Tibial artery (tissue), 4 donors: ENCODE measurements at regions of chr11 and their contacts with region 1.

Region 1: DNA sequence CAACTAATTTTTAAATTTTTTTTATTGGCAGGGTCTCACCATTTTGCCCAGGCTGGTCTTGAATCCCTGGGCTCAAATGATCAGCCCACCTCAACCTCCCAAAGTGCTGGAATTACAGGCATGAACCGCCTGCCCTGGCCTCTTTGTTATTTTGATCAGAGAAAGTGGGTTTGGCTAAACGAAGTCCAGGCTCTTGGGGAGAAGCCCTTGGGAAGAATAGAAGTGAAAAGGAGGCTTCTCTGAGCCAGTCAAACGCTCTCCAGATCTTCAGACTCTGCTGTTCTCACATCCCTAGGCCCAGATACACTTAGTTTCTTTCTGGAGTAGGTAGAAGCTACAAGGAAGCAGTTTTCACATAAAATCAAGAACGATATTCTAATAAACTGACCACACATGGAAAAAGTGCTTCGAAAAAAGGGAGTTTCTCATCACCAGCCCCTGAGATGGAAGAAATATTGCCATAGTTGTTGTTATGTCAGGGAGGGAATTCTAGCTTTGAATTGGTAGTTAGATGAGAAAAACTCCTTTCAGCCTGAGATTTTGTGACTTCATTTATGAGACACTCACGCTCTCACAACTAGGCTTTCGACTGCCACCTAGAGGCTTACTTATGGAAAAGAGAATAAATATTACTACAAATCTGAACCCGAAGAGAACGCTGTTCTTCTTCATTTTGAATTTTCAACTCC is 41.7 kb upstream of the AQP11 start:
- DNase-seq: peak in 1 of 2 donors; percentile 30
- H3K4me3 ChIP-seq: no peak overlapping the region
- H3K27ac ChIP-seq: no peak overlapping the region
- H3K4me1 ChIP-seq: peaks cover 0 to 4% (median 0%) of the 10 kb centered on the region in 4 donors
- H3K27me3 ChIP-seq: no peaks in the 10 kb centered on the region
- CTCF ChIP-seq: peak; percentile 57 to 60

Region 2: GRCh38 chr11:77187776-77188632 is 360.0 kb before region 1 on chr11:
- intact Hi-C with region 1: loop called (anchors 10 kb)
- DNase-seq: peak; percentile 70 to 83
- H3K4me3 ChIP-seq: no peak overlapping the region
- H3K27ac ChIP-seq: no peak overlapping the region
- H3K4me1 ChIP-seq: no peaks in the 10 kb centered on the region
- H3K27me3 ChIP-seq: peaks cover 0 to 4% of the 10 kb centered on the region in 2 donors
- CTCF ChIP-seq: peak; percentile 86 to 88

Region 3: DNA sequence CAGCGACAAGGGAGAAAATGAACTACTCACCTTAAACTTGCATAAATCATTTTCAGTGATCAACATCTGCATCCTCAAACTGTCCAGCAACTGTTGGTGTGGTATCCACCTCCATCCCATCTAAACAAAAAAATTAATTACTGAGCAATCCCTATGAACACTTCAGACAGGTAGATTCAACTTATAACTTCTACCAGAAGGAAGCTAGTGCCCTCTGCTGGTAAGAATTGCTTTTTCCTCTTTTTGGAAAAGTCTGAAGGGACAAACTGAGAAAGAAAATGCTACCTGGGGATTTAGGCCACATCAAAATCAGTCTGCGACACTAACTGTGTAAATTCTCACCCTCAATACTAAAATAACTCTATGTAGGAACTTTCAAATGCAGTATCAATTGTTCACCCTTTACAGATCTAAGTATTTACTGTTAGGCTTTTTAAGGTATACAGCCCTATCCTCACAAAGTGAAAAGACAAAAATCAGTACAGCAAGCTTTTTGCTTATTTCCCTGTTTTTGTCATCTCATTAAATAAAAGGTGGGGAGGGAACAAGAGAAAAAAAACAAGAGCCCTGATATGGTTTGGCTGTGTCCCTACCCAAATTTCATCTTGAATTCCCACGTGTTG is 71.7 kb after region 1 on chr11:
- intact Hi-C with region 1: no loop called
- DNase-seq: no peak
- H3K4me3 ChIP-seq: no peak overlapping the region
- H3K27ac ChIP-seq: no peak overlapping the region
- H3K4me1 ChIP-seq: no peaks in the 10 kb centered on the region
- H3K27me3 ChIP-seq: no peaks in the 10 kb centered on the region
- CTCF ChIP-seq: peak; percentile 55 to 60